Common myeloid progenitor, CD34-positive (primary cell): ENCODE measurements at regions of chr14 and their contacts with region 1.

Region 1: GRCh38 chr14:64294672-64295413 is 672 bp upstream of the ESR2 start:
- DNase-seq: peak; percentile 77 to 86 (median 85)
- H3K4me3 ChIP-seq: peak overlapping the region; percentile 44 to 82 (median 56)
- H3K27ac ChIP-seq: no peak overlapping the region
- H3K4me1 ChIP-seq: peaks cover 3 to 22% (median 13%) of the 10 kb centered on the region in 4 experiments
- H3K27me3 ChIP-seq: peaks cover 0 to 15% (median 3%) of the 10 kb centered on the region in 5 experiments

Region 2: DNA sequence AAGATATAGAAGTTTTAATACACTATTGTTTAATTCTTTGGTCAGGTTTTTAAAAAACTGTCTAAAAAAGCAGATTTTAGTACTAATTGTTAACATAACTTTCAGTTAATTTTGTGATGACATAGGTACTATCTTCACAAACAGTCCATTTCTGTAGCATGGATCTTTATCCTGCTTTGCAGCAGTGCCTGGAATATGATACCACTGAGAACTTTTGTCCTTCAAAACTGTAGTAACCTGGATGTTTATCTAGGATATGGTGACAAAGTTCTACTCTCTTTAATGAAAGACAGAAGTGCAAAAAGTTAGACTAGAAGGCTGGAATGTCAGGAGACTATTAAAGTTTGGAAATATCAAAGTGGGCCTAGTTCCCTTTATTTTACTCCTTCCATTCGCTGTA is 282.1 kb before region 1 on chr14:
- CTCF ChIA-PET with region 1: interaction called, 41 read pairs
- POLR2A ChIA-PET with region 1: no interaction called
- DNase-seq: no peak
- H3K4me3 ChIP-seq: no peak overlapping the region
- H3K27ac ChIP-seq: no peak overlapping the region
- H3K4me1 ChIP-seq: no peaks in the 10 kb centered on the region
- H3K27me3 ChIP-seq: no peaks in the 10 kb centered on the region

Region 3: GRCh38 chr14:64082837-64083236 is 212.0 kb before region 1 on chr14:
- CTCF ChIA-PET with region 1: no interaction called
- POLR2A ChIA-PET with region 1: no interaction called
- DNase-seq: no peak
- H3K4me3 ChIP-seq: no peak overlapping the region
- H3K27ac ChIP-seq: no peak overlapping the region
- H3K4me1 ChIP-seq: no peaks in the 10 kb centered on the region
- H3K27me3 ChIP-seq: no peaks in the 10 kb centered on the region

Region 4: DNA sequence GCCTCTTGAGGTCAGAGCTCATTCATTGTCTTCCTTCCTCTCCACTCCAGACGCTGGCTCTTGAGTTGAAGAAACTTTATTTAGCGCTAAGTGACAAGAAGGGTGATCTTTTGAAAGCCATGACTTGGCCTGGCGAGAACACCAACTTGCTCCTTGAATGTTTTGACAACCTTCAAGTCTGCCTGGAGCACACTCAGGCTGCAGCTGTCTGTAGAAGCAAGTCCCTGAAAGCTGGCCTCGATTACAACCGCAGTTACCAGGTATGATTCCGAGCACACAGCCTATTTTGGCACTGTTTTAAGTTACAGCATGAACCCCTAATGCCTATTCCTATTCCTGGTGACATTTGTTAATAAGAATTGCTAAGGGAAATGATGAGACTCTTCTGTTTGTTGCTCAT is 168.3 kb before region 1 on chr14:
- CTCF ChIA-PET with region 1: interaction called, 13 read pairs
- POLR2A ChIA-PET with region 1: no interaction called
- DNase-seq: no peak
- H3K4me3 ChIP-seq: no peak overlapping the region
- H3K27ac ChIP-seq: no peak overlapping the region
- H3K4me1 ChIP-seq: no peaks in the 10 kb centered on the region
- H3K27me3 ChIP-seq: no peaks in the 10 kb centered on the region

Region 5: DNA sequence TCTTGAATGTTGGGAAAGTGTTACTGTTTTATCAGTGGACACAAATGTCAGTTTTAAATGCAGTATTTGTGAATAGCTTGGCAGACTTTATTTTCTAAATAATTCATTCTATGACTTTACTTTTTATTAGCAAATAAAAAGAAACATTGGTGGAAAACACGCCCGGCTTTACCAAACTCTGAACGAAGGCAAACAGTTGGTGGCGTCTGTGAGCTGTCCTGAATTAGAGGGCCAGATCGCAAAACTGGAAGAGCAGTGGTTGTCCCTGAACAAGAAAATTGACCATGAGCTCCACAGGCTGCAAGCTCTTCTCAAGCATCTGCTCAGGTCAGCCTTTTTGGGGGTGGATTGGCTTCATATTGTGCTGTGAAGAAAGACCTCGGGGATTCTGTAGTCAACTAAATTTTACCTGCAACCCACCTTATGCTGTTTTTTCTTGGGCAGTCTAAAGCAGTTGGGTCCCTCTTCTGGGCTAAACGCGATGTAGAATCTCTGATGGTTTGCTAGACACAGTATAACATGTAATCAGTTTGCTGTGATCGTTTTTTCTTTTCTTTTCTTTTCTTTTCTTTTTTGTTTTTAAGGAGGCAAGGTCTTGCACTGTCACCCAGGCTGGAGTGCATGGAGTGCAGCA is 157.1 kb before region 1 on chr14:
- CTCF ChIA-PET with region 1: interaction called, 87 read pairs
- POLR2A ChIA-PET with region 1: no interaction called
- DNase-seq: peak; percentile 8 to 18 (median 11)
- H3K4me3 ChIP-seq: no peak overlapping the region
- H3K27ac ChIP-seq: no peak overlapping the region
- H3K4me1 ChIP-seq: peaks cover 0 to 2% (median 0%) of the 10 kb centered on the region in 4 experiments
- H3K27me3 ChIP-seq: no peaks in the 10 kb centered on the region

Region 6: DNA sequence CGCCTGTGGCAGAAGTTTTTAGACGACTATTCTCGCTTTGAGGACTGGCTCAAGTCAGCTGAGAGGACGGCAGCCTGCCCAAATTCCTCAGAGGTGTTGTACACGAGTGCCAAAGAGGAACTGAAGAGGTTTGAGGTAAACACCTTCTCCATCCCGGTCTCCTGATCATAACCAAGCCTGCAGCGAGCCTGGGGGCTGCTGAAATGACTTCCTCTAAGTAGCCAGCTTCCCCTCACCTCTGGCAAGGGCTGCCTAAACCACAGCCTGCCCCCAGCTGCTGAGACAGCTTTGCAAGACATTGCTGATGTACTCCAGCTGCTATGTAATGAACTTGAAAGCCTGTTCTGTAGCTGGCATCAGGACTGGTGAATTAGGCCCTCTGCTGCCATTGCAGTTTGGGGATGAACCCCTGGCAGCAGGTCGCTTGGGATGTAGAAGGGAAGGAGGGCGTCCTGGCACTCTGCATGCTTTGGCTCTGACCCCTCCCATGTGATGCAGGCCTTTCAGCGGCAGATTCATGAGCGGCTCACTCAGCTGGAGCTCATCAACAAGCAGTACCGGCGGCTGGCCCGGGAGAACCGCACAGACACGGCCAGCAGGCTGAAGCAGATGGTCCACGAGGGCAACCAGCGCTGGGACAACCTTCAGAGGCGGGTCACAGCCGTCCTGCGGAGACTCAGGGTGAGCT is 85.3 kb before region 1 on chr14:
- CTCF ChIA-PET with region 1: interaction called, 10 read pairs
- POLR2A ChIA-PET with region 1: no interaction called
- DNase-seq: peak; percentile 67 to 95 (median 92)
- H3K4me3 ChIP-seq: peak overlapping the region in 3 of 7 experiments; percentile 30 to 34 (median 34)
- H3K27ac ChIP-seq: no peak overlapping the region
- H3K4me1 ChIP-seq: peaks cover 2 to 24% (median 18%) of the 10 kb centered on the region in 4 experiments
- H3K27me3 ChIP-seq: no peaks in the 10 kb centered on the region

Region 7: GRCh38 chr14:64220466-64220865 is 74.4 kb before region 1 on chr14:
- CTCF ChIA-PET with region 1: interaction called, 11 read pairs
- POLR2A ChIA-PET with region 1: no interaction called
- DNase-seq: peak; percentile 89 to 96 (median 95)
- H3K4me3 ChIP-seq: peak overlapping the region in 2 of 7 experiments; percentile 33 to 45
- H3K27ac ChIP-seq: no peak overlapping the region
- H3K4me1 ChIP-seq: peaks cover 7 to 53% (median 32%) of the 10 kb centered on the region in 4 experiments
- H3K27me3 ChIP-seq: no peaks in the 10 kb centered on the region

Region 8: GRCh38 chr14:64279704-64280668 is 14.9 kb before region 1 on chr14:
- CTCF ChIA-PET with region 1: interaction called, 19 read pairs
- POLR2A ChIA-PET with region 1: no interaction called
- DNase-seq: peak; percentile 52 to 83 (median 80)
- H3K4me3 ChIP-seq: peak overlapping the region in 2 of 7 experiments; percentile 47 to 52
- H3K27ac ChIP-seq: no peak overlapping the region
- H3K4me1 ChIP-seq: peaks cover 0 to 28% (median under 1%) of the 10 kb centered on the region in 4 experiments
- H3K27me3 ChIP-seq: no peaks in the 10 kb centered on the region